ENCODE measurements at regions of chr19 and their contacts with region 1.

Region 1: DNA sequence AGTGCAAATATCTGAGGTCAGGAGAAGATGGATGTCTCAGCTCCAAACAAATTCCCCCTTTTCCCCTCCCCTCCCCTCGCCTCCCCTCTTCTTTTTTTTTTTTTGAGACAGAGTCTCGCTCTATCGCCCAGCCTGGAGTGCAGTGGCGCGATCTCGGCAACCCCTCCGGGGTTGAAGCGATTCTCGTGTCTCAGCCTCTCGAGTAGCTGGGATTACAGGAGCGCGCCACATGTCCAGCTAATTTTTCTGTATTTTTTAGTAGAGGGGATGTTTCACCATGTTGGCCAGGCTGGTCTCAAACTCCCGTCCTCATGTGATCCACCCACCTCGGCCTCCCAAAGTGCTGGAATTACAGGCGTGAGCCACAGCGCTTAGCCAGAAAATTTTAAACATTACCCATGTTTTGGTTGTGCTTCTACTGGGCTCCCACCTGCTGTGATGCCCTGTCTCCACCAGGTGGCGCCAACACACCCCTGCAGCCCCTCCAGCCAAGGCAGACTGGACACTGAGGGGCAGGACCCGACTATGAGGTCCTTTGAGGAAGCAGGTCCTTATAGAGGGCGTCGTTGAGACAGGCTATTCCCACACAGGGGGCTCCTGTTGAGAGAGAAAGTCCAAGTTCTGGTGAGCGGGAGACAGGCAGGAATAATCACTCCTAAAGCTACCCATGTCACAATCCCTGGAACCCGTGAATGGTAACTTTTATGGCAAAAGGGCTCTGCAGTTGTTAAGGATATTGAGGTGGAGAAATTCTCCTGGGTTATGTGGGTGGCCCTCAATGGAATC is 6.3 kb downstream of the ERICH4 start:
- DNase-seq: peak; percentile 77 to 89
- H3K4me3 ChIP-seq: peak overlapping the region in 3 of 4 donors; percentile 19 to 30 (median 22)
- H3K27ac ChIP-seq: no peak overlapping the region
- H3K4me1 ChIP-seq: peaks cover 0 to 10% (median 10%) of the 10 kb centered on the region in 4 donors
- H3K27me3 ChIP-seq: peaks cover 0 to 33% (median 4%) of the 10 kb centered on the region in 3 donors
- CTCF ChIP-seq: peak in 5 of 7 experiments; percentile 89 to 97 (median 95)
- EP300 ChIP-seq: no peak
- POLR2A ChIP-seq: no peak

Region 2: GRCh38 chr19:41515015-41515652 is 65.9 kb after region 1 on chr19:
- intact Hi-C with region 1: no loop called
- DNase-seq: no peak
- H3K4me3 ChIP-seq: no peak overlapping the region
- H3K27ac ChIP-seq: no peak overlapping the region
- H3K4me1 ChIP-seq: no peaks in the 10 kb centered on the region
- H3K27me3 ChIP-seq: peaks cover 0 to 99% (median 13%) of the 10 kb centered on the region in 3 donors
- CTCF ChIP-seq: no peak
- EP300 ChIP-seq: no peak
- POLR2A ChIP-seq: no peak

Region 3: DNA sequence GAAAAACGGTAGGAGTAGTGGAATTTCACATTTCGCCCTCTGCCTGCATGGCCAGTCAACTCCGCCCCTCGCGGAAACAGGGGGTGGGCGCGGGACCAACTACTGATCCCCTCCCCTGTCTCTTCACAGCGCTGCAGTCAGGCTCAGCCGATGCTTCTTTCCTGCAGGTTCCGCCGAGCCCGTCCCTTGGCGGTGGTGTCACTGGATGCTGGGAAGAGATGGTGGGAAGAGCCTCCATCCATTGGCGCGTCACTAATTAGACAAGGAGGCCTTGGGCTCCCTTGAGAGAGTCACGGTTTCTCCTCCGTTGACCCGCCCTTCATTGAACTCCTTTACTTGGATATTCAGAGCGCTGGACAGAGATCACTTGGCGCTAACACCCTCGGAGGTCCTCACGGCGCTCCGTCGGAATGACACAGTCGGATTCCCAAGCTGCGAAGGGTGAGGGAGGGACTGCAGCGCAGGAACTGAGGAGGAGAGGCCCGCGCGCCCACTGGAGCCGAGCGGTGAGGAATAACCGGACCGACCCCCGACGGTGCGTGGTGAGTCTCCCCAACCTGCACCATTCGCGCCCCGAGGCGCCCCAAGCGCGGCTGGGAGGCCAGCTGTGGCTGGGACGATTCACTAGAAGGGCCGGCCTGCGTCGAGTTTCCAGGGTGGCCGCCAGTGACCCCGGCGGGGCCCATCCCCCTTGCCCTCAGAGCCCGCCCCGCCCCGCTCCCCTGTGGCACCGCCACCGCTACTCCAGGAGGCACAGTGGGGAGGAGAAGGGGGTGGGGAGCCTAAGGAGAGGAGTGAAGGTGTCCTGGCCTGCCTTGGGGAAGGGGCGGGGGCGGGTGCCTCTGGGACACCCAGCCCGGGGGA is 115.5 kb after region 1 on chr19:
- intact Hi-C with region 1: loop called (anchors 5 kb)
- DNase-seq: peak in 1 of 2 donors; percentile 24
- H3K4me3 ChIP-seq: peak overlapping the region in 1 of 4 donors; percentile 22
- H3K27ac ChIP-seq: no peak overlapping the region
- H3K4me1 ChIP-seq: peaks cover 0 to 24% (median 12%) of the 10 kb centered on the region in 4 donors
- H3K27me3 ChIP-seq: peaks cover 15 to 79% (median 31%) of the 10 kb centered on the region in 3 donors
- CTCF ChIP-seq: no peak
- EP300 ChIP-seq: no peak
- POLR2A ChIP-seq: no peak